AG04450 (cell line): ENCODE measurements at regions of chr12 and their contacts with region 1.

Region 1: GRCh38 chr12:69254046-69254445 is 14.7 kb downstream of the CPSF6 start:
- DNase-seq: no peak
- H3K4me3 ChIP-seq: no peak overlapping the region
- H3K27ac ChIP-seq: no peak overlapping the region
- H3K27me3 ChIP-seq: no peaks in the 10 kb centered on the region
- CTCF ChIP-seq: peak; percentile 56

Region 2: DNA sequence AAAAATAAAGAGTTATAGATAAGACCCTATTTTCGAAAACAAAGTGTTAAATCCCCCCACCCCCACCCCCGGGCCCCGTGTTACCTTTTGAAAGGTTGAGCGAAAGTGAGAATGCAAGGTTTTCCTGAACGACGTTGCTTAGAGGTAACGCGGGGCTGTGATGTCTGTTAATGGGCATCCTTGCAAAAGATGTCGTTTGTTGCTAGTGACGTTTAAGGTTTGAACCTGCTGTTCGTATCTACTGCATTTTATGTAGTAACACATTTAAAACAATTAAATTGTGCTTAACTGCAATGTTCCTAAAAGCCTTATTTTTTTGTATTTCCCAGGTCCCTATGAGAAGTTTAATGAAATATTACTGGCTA is 13.4 kb before region 1 on chr12:
- CTCF ChIA-PET with region 1: interaction called, 24 read pairs
- POLR2A ChIA-PET with region 1: no interaction called
- DNase-seq: no peak
- H3K4me3 ChIP-seq: peak overlapping the region; percentile 80
- H3K27ac ChIP-seq: no peak overlapping the region
- H3K27me3 ChIP-seq: no peaks in the 10 kb centered on the region
- CTCF ChIP-seq: no peak

Region 3: DNA sequence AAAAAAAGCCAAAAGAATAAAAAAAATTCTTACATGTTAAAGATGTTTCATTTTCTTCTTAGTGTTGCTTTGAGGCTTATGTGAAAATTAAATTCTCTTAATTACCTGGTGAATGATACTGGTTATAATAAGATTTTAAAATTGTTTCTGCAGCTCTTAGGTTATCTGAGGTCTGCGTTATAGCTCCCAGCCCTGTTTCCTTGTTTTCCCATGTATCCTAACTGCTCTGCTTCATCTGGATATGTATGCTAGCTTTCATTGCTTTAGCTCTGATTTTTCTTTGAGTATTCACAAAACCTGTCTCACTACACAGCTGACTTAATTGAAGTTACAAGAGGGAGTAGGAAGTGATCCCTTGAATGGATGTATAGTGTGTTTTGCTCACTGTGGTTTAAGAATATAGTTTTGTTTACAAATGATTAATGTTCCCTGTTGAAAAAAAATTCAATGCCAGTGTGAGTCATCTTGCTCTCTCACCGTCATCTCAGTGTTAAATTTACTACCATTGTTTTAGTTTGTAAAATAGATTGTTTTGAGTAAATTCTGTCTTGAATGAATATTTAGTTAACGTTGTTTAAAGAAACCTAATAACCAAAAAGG is 12.1 kb after region 1 on chr12:
- CTCF ChIA-PET with region 1: interaction called, 34 read pairs
- POLR2A ChIA-PET with region 1: interaction called, 3 read pairs
- DNase-seq: peak; percentile 34
- H3K4me3 ChIP-seq: no peak overlapping the region
- H3K27ac ChIP-seq: no peak overlapping the region
- H3K27me3 ChIP-seq: no peaks in the 10 kb centered on the region
- CTCF ChIP-seq: no peak

Region 4: GRCh38 chr12:69309461-69309860 is 55.4 kb after region 1 on chr12:
- CTCF ChIA-PET with region 1: no interaction called
- POLR2A ChIA-PET with region 1: no interaction called
- DNase-seq: no peak
- H3K4me3 ChIP-seq: no peak overlapping the region
- H3K27ac ChIP-seq: no peak overlapping the region
- H3K27me3 ChIP-seq: no peaks in the 10 kb centered on the region
- CTCF ChIP-seq: no peak